GM12878 (cell line): ENCODE measurements at regions of chr5 and their contacts with region 1.

Region 1: DNA sequence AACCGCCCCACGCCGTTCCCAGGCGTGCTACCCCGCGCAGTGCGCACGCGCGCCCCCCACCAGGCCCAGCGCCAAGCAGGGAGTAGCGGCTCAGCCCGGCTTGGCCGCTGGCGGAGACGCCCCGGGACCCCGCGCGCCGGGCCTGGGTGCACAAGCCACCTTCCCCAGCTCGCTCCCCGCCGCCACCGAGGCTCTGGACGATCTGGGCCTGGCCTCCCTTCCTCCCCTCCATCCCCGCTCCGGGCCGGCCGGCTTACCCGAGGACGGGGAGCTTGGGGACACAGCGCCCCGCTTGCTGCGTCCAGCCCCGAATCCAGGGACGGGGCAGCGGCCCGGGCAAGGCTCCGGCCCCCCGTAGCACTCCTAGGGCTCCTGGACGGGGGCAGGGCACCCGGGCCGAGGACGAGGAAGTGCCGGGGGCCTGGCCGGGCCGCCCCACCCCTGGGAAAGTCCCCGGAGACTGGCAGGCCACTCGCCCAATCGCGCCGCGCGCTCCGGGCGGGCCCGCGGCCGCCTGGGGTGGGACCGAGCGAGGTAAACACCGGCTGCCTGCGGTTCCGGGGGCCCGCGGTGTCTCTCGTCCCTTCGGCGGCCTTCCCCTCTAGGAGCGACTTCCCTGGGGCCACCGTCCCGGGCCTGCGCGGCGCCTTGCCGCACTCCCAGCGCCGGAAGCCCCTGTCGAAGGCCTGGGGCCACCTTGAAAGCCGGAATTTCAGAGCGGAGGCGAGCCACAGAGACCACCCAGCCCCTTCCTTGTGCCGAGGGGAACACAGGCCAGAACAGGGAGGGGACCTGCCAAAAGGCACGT is at the start of gene TNIP1:
- DNase-seq: no peak
- ATAC-seq: peak; percentile 78
- H3K4me3 ChIP-seq: peak within 1 kb of the TSS; percentile 89
- H3K27ac ChIP-seq: peak within 1 kb of the TSS; percentile 90
- H3K4me1 ChIP-seq: peaks cover 44% of the 10 kb centered on the region
- H3K27me3 ChIP-seq: no peaks in the 10 kb centered on the region
- CTCF ChIP-seq: no peak
- EP300 ChIP-seq: no peak; a peak in 1 of 4 replicates
- POLR2A ChIP-seq: peak; percentile 89
- RAD21 ChIP-seq: no peak
- polyA plus RNA-seq, gene TNIP1: 4.4 to 13.7 TPM

Region 2: DNA sequence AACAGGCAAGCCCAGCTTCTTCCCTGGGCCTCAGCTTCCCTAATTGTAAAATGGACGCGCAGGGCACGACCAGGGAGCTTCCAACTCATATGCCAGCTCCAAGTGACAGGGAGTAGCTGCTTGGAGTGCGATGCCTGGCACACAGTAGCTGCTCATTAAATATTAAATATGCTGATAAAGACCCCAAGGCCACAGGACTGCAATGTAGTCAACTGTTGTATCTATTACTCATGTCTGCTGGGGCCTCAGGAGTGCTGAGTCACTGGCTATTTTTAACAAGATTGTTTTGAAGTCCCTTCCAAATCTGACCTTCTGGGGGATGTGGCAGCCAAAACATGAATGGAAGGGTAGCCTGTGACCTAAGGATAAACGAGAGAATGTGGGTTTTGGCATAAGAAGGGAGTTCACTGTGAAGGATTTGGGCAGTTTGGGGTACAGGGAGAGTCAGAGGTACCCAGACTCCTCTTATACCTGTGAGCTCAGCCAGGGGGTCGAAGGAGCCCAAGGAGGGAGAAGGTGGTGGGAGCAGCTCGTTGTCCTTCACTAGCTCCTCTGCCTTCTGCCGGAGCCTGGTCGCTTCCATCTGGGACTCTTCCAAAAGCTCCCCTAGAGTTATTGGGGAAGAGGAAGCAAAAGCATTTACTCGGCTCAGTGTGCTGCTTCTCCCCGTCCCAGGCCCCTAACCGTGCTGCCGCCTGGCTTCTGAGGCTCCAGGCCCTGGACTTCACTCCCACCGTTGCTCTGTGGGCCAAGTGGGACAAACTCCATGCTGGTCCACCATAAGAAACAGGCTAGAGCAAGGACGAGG is 17.5 kb before region 1 on chr5:
- CTCF ChIA-PET with region 1: interaction called, 10 read pairs
- POLR2A ChIA-PET with region 1: interaction called, 12 read pairs
- RAD21 ChIA-PET with region 1: interaction called, 19 read pairs
- SMC1A ChIA-PET with region 1: interaction called, 20 read pairs
- in situ Hi-C with region 1: no loop called
- intact Hi-C with region 1: loop called (anchors 2 kb)
- DNase-seq: no peak
- ATAC-seq: no peak
- H3K4me3 ChIP-seq: no peak overlapping the region
- H3K27ac ChIP-seq: no peak overlapping the region; the same call in 1 of the 2 replicates
- H3K4me1 ChIP-seq: peaks cover 82% of the 10 kb centered on the region
- H3K27me3 ChIP-seq: no peaks in the 10 kb centered on the region
- CTCF ChIP-seq: no peak
- EP300 ChIP-seq: no peak
- POLR2A ChIP-seq: no peak; the same call in 1 of the 2 replicates
- RAD21 ChIP-seq: no peak

Region 3: GRCh38 chr5:151093476-151093889 is 12.7 kb after region 1 on chr5:
- CTCF ChIA-PET with region 1: interaction called, 19 read pairs
- POLR2A ChIA-PET with region 1: interaction called, 222 read pairs
- RAD21 ChIA-PET with region 1: interaction called, 94 read pairs
- SMC1A ChIA-PET with region 1: interaction called, 125 read pairs
- in situ Hi-C with region 1: no loop called
- intact Hi-C with region 1: no loop called
- DNase-seq: no peak
- ATAC-seq: peak; percentile 2; the same call in 2 of the 3 replicates
- H3K4me3 ChIP-seq: peak overlapping the region; percentile 53
- H3K27ac ChIP-seq: peak overlapping the region; percentile 98
- H3K4me1 ChIP-seq: peaks cover 59% of the 10 kb centered on the region
- H3K27me3 ChIP-seq: no peaks in the 10 kb centered on the region
- CTCF ChIP-seq: no peak
- EP300 ChIP-seq: no peak
- POLR2A ChIP-seq: no peak
- RAD21 ChIP-seq: no peak

Region 4: GRCh38 chr5:151141535-151141934 is 60.7 kb after region 1 on chr5:
- CTCF ChIA-PET with region 1: no interaction called
- POLR2A ChIA-PET with region 1: interaction called, 12 read pairs
- RAD21 ChIA-PET with region 1: interaction called, 10 read pairs
- SMC1A ChIA-PET with region 1: no interaction called
- in situ Hi-C with region 1: no loop called
- intact Hi-C with region 1: no loop called
- DNase-seq: no peak
- ATAC-seq: peak; percentile 90
- H3K4me3 ChIP-seq: peak overlapping the region; percentile 52
- H3K27ac ChIP-seq: peak overlapping the region; percentile 61
- H3K4me1 ChIP-seq: peaks cover 60% of the 10 kb centered on the region
- H3K27me3 ChIP-seq: no peaks in the 10 kb centered on the region
- CTCF ChIP-seq: no peak
- EP300 ChIP-seq: no peak
- POLR2A ChIP-seq: peak; percentile 67
- RAD21 ChIP-seq: 0 out of 2 replicates have a peak, but pooled peaks have one; percentile 13

Region 5: GRCh38 chr5:151223469-151224264 is 142.8 kb after region 1 on chr5 and contains the start of gene CCDC69:
- CTCF ChIA-PET with region 1: interaction called, 3 read pairs
- POLR2A ChIA-PET with region 1: interaction called, 10 read pairs
- RAD21 ChIA-PET with region 1: no interaction called
- SMC1A ChIA-PET with region 1: interaction called, 3 read pairs
- in situ Hi-C with region 1: no loop called
- intact Hi-C with region 1: no loop called
- DNase-seq: no peak
- ATAC-seq: peak; percentile 82
- H3K4me3 ChIP-seq: peak within 1 kb of the TSS; percentile 97
- H3K27ac ChIP-seq: peak within 1 kb of the TSS; percentile 89
- H3K4me1 ChIP-seq: peaks cover 24% of the 10 kb centered on the region
- H3K27me3 ChIP-seq: no peaks in the 10 kb centered on the region
- CTCF ChIP-seq: no peak
- EP300 ChIP-seq: no peak
- POLR2A ChIP-seq: peak; percentile 80
- RAD21 ChIP-seq: 0 out of 2 replicates have a peak, but pooled peaks have one; percentile 16
- polyA plus RNA-seq, gene CCDC69: 13.5 to 21.4 TPM